Posterior vena cava (tissue), 2 donors: ENCODE measurements at regions of chr20 and their contacts with region 1.

Region 1: GRCh38 chr20:8808202-8808535 is 260.7 kb upstream of the PLCB4 start:
- DNase-seq: no peak

Region 2: DNA sequence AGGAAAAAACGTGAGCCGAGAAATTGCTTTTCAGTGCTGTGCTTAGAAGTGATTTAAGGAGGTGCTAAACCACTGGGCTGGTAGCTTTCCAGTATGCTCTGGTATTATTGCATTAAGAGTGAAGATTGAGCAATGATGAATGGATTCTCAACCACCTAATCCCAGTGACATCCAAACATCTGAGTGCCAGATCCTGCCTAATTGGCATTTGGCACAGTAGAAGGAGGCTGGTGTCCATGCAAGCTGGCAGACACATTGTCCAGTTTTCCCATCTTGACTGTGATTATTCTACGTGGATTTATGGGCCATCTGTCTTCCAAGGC is 137.3 kb before region 1 on chr20:
- intact Hi-C with region 1: no loop called
- DNase-seq: no peak

Region 3: DNA sequence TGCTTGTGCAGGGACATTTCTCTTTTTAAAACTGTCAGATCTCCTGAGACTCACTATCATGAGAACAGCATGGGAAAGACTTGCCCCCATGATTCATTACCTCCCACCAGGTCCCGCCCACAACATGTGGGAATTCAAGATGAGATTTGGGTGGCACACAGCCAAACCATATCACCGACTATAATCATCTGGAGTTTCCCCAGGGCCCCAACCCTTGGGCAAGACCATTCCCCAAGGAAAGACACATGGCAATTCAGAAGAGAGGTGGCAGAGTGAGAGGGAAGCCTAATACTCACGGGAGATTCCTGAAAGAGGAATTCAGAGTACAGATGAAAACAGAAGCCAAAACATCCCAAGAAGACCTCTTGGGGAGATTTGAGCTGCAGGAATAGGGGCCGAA is 30.3 kb before region 1 on chr20:
- intact Hi-C with region 1: no loop called
- DNase-seq: no peak

Region 4: GRCh38 chr20:8829256-8829655 is 21.1 kb after region 1 on chr20:
- intact Hi-C with region 1: loop called in 1 of 2 experiments (anchors 2 kb)
- DNase-seq: no peak